Posterior cingulate gyrus (tissue), 11 donors: ENCODE measurements at regions of chr12 and their contacts with region 1.

Region 1: GRCh38 chr12:53295070-53295890 is at the start of gene PFDN5:
- DNase-seq: peak; percentile 78 to 99 (median 91)

Region 2: GRCh38 chr12:53190108-53190729 is 105.1 kb before region 1 on chr12:
- intact Hi-C with region 1: no loop called
- DNase-seq: peak in 4 of 10 donors; percentile 40 to 90 (median 63)

Region 3: DNA sequence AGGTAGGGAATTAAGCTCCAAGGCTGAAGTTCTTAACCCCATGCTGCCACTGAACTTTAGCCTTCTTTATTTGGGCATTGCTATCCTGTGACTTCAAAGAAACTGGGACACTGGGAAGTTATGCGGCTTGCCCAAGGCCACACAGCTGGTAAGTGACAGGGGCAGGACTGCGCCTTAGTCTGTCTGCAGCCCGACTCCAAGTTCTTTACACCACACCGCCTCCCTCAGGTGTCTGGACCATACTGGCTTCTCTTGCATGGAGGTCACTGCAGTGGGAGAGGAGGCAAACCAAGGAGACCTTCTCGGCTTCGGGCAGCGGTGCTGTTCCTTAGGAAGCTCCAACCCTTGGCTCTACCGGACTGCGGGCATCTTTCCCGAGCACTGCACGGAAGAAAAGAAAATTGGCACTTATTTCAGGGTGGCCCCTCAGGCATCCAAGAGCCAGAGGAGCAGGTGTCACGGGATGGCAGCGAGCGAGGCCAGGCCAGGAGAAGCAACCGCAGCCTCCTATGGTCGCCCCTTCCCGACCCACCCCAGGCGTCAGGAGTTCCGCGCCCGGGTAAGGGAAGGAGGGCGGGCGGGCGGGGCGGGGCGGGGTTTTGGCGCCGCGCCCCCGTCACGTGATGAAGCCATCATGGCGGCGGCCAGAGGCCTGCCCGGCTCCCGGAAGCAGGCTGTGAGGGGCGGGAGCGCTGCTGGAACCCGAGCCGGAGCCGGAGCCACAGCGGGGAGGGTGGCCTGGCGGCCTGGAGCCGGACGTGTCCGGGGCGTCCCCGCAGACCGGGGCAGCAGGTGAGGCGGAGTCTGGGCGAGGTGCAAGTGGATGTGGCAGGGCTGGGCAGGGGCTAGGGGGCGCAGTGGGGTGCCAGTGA is 43.6 kb before region 1 on chr12:
- intact Hi-C with region 1: loop called (anchors 5 kb)
- DNase-seq: peak; percentile 66 to 96 (median 72)

Region 4: GRCh38 chr12:53321074-53321814 is 26.0 kb after region 1 on chr12 and contains the start of gene AAAS:
- intact Hi-C with region 1: loop called (anchors 2 kb)
- DNase-seq: peak; percentile 90 to 99 (median 95)

Region 5: GRCh38 chr12:54134850-54135249 is 839.6 kb after region 1 on chr12:
- intact Hi-C with region 1: no loop called
- DNase-seq: peak in 1 of 10 donors; percentile 74